Heart right ventricle (tissue), 16 donors: ENCODE measurements at regions of chr7 and their contacts with region 1.

Region 1: GRCh38 chr7:52571026-52571425 is 464.4 kb upstream of the POM121L12 start:
- DNase-seq: no peak
- ATAC-seq: no peak
- H3K4me3 ChIP-seq: no peak overlapping the region
- H3K27ac ChIP-seq: no peak overlapping the region
- H3K4me1 ChIP-seq: no peaks in the 10 kb centered on the region
- H3K27me3 ChIP-seq: no peaks in the 10 kb centered on the region
- CTCF ChIP-seq: no peak

Region 2: DNA sequence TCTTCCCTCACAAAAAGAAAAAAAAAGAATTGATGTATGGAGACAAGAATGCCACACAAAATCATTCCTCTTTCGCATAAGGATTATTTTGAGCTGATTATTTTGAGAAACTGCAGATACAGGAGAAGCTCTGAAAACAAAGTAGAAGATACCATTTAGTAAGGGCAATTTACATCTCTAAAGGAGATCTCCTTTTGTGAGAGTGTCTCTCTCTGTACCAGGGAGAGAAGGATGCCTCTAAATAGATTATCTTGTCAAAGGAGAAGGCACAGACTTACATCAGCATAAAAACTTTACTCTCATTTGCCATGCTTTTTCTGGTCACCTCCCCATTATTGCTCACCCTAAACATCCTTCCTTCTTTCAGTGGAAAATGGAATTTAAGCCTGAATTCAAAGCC is 506.5 kb before region 1 on chr7:
- intact Hi-C with region 1: no loop called
- DNase-seq: no peak
- ATAC-seq: no peak
- H3K4me3 ChIP-seq: no peak overlapping the region
- H3K27ac ChIP-seq: no peak overlapping the region
- H3K4me1 ChIP-seq: no peaks in the 10 kb centered on the region
- H3K27me3 ChIP-seq: no peaks in the 10 kb centered on the region
- CTCF ChIP-seq: no peak

Region 3: GRCh38 chr7:52555805-52556204 is 15.2 kb before region 1 on chr7:
- intact Hi-C with region 1: loop called in 1 of 10 experiments (anchors 2 kb)
- DNase-seq: no peak
- ATAC-seq: no peak
- H3K4me3 ChIP-seq: no peak overlapping the region
- H3K27ac ChIP-seq: no peak overlapping the region
- H3K4me1 ChIP-seq: no peaks in the 10 kb centered on the region
- H3K27me3 ChIP-seq: no peaks in the 10 kb centered on the region
- CTCF ChIP-seq: no peak

Region 4: GRCh38 chr7:52620849-52621248 is 49.8 kb after region 1 on chr7:
- intact Hi-C with region 1: loop called in 1 of 10 experiments (anchors 5 kb)
- DNase-seq: no peak
- ATAC-seq: no peak
- H3K4me3 ChIP-seq: no peak overlapping the region
- H3K27ac ChIP-seq: no peak overlapping the region
- H3K4me1 ChIP-seq: no peaks in the 10 kb centered on the region
- H3K27me3 ChIP-seq: no peaks in the 10 kb centered on the region
- CTCF ChIP-seq: no peak

Region 5: GRCh38 chr7:52775876-52776275 is 204.8 kb after region 1 on chr7:
- intact Hi-C with region 1: no loop called
- DNase-seq: no peak
- ATAC-seq: no peak
- H3K4me3 ChIP-seq: no peak overlapping the region
- H3K27ac ChIP-seq: no peak overlapping the region
- H3K4me1 ChIP-seq: no peaks in the 10 kb centered on the region
- H3K27me3 ChIP-seq: no peaks in the 10 kb centered on the region
- CTCF ChIP-seq: no peak

Region 6: GRCh38 chr7:53740971-53741370 is 1169.9 kb after region 1 on chr7:
- intact Hi-C with region 1: no loop called
- DNase-seq: no peak
- ATAC-seq: no peak
- H3K4me3 ChIP-seq: no peak overlapping the region
- H3K27ac ChIP-seq: no peak overlapping the region
- H3K4me1 ChIP-seq: no peaks in the 10 kb centered on the region
- H3K27me3 ChIP-seq: no peaks in the 10 kb centered on the region
- CTCF ChIP-seq: no peak